PC-9 (cell line): ENCODE measurements at regions of chr22 and their contacts with region 1.

Region 1: DNA sequence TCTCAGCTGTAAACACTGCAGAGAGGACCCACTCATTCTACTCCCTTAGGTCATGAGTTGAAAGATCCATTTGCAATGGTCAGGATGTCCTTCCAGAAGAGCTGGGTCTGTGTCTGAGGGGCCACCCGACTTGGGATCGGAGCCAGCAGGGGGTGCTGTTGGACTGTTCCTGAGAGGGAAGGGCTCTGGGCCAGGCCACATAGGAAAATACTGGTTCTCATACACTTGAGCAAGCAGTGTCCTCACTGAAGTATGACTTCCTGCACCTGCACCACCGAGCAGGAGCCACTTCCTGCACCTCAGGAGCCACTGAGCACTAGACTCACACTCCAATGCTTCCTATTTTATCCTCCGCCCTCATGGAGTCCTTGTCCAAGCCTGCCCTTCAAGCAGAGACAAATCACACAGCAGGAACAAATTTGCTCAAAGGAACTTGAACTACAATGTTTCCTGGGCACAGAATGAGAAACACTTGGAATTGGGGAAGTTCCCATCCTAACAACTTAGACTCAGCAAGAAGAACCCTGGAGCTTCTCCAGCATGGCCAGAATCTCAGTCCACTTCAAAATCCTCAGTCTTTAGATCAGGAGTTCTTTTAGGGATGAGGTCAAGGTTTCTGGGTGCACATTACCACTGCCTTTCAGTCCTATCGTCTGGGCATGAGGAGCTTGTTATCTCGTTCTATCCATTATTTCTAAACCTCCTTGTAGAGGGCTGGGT is 36.6 kb upstream of the VPREB1 start:
- DNase-seq: peak; percentile 54 to 65
- H3K4me3 ChIP-seq: no peak overlapping the region
- H3K27ac ChIP-seq: no peak overlapping the region
- H3K4me1 ChIP-seq: peaks cover 11% of the 10 kb centered on the region
- H3K27me3 ChIP-seq: no peaks in the 10 kb centered on the region
- CTCF ChIP-seq: peak; percentile 73

Region 2: DNA sequence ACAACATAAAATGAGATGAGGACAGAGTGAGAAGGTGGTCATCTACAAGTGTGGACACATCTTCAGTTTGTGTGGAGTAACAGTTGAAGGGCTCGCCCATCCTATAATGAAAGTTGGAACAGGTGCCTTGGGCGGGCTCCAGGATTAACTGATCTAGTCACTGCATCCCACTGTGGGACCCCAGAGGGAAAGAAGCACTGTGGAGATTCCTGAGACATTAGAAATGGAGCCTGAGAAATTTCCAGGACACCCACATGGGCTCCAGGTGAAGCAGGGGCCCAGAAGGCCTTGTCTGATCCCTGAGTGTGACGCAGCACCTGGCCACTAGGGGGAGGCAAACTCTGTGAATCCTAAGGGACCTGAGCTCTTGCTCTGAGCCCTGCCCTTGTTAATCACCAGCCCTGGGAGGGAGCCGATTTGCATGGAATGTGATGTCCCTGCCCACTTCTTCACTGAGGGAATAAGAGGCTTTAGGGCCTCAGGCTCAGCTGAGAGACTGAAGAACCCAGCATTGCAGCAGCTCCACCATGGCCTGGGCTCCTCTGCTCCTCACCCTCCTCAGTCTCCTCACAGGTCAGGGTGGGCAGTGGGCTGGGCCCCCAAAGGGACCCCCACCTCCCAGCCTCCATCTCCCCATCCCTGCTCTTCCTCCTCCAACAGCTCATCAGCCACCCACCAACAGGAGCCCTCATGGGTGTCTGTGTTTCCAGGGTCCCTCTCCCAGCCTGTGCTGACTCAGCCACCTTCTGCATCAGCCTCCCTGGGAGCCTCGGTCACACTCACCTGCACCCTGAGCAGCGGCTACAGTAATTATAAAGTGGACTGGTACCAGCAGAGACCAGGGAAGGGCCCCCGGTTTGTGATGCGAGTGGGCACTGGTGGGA is 134.9 kb after region 1 on chr22:
- CTCF ChIA-PET with region 1: no interaction called
- POLR2A ChIA-PET with region 1: no interaction called
- intact Hi-C with region 1: loop called (anchors 5 kb)
- DNase-seq: peak; percentile 68 to 70
- H3K4me3 ChIP-seq: no peak overlapping the region
- H3K27ac ChIP-seq: no peak overlapping the region
- H3K4me1 ChIP-seq: no peaks in the 10 kb centered on the region
- H3K27me3 ChIP-seq: peaks cover 17% of the 10 kb centered on the region; the same call in 1 of the 2 replicates
- CTCF ChIP-seq: peak; percentile 85

Region 3: GRCh38 chr22:22422629-22423112 is 214.7 kb after region 1 on chr22:
- CTCF ChIA-PET with region 1: no interaction called
- POLR2A ChIA-PET with region 1: no interaction called
- intact Hi-C with region 1: loop called (anchors 10 kb)
- DNase-seq: peak in 1 of 2 experiments; percentile 21
- H3K4me3 ChIP-seq: no peak overlapping the region
- H3K27ac ChIP-seq: no peak overlapping the region
- H3K4me1 ChIP-seq: no peaks in the 10 kb centered on the region
- H3K27me3 ChIP-seq: peaks cover 58% of the 10 kb centered on the region
- CTCF ChIP-seq: peak; percentile 74

Region 4: DNA sequence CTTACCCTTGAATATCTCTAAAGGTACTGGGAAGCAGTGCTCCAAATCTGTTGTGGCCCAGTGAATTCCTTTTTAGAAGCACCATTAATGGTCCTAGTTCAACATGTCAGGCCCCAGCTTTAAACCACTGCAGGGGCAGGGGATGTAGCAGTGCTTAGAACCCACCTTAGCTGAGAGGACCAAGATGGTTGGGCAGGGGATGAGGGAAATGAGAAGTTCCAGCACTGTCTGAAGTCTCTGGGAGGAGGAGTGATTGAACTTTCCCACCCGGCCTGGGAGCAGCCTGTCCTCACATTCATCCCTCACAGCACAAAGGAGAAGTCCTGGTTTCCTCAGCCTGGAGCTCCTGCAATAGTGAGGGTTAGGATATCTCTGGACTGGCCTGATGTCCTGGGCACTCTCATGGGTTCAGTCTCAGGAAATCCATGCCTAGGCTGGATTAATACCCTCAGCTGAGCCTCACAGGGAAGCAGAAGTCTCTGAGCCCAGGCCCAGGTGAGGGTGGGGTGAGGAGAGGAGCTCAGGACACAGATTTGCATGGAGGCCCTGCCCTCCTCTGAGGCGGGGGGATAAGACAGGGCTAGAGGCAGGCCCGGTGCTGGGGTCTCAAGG is 379.7 kb after region 1 on chr22:
- CTCF ChIA-PET with region 1: no interaction called
- POLR2A ChIA-PET with region 1: no interaction called
- intact Hi-C with region 1: loop called (anchors 10 kb)
- DNase-seq: no peak
- H3K4me3 ChIP-seq: no peak overlapping the region
- H3K27ac ChIP-seq: no peak overlapping the region
- H3K4me1 ChIP-seq: no peaks in the 10 kb centered on the region
- H3K27me3 ChIP-seq: peaks cover 20% of the 10 kb centered on the region
- CTCF ChIP-seq: no peak